ENCODE measurements at regions of chr1 and their contacts with region 1.

Region 1: GRCh38 chr1:42456010-42456758 is at the starts of genes PPCS and ZMYND12:
- DNase-seq: peak; percentile 91
- total RNA-seq, gene PPCS: 44.3 TPM
- total RNA-seq, gene ZMYND12: 1.6 TPM

Region 2: DNA sequence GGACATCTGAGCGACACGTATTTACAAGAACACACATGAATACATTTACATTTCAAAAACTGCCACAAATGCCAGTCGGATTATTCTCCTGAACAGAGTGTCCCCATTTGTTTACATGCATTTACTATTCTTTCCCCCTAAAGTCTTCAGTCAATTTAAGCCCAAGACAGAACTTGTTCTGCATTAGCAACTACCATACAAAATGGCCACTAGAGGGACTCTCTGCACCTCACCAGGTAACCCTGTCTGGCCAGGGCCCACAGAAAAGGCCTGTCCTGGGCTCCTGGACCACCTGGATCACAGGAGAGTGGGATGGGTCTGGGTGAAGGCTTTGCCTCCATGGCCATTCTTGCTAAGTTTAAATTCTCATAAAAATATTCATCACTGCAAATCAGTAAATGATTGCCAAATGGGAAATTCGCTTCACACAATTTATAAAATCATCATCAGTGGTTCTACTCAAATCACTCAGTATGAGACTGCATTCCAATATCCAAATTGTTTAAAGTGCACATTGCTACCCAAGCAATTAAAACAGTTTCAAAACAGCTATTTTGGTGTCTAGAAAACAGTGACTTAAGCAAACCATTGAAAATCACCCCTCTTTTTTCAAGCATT is 279.2 kb before region 1 on chr1:
- intact Hi-C with region 1: no loop called
- DNase-seq: no peak

Region 3: GRCh38 chr1:42380586-42381279 is 75.5 kb before region 1 on chr1 and contains the start of gene RIMKLA:
- intact Hi-C with region 1: loop called (anchors 5 kb)
- DNase-seq: no peak
- total RNA-seq, gene RIMKLA: 7.6 TPM

Region 4: GRCh38 chr1:42766741-42767509 is 310.7 kb after region 1 on chr1 and contains the starts of genes C1orf50 and P3H1:
- intact Hi-C with region 1: no loop called
- DNase-seq: peak; percentile 100
- total RNA-seq, gene C1orf50: 11.0 TPM
- total RNA-seq, gene P3H1: 12.2 TPM